Naive thymus-derived CD8-positive, alpha-beta T cell (primary cell): ENCODE measurements at regions of chr16 and their contacts with region 1.

Region 1: GRCh38 chr16:31179747-31180459 is at the start of gene FUS:
- DNase-seq: peak; percentile 83 to 98 (median 92)
- ATAC-seq: peak; percentile 54 to 62
- H3K4me3 Mint-ChIP-seq: peak within 1 kb of the TSS; percentile 92 to 98 (median 95)
- H3K27ac Mint-ChIP-seq: peak within 1 kb of the TSS; percentile 97 to 100 (median 99)
- H3K4me1 Mint-ChIP-seq: peaks cover 43 to 70% (median 59%) of the 10 kb centered on the region in 4 donors
- H3K27me3 Mint-ChIP-seq: peaks cover 0 to 3% (median 0%) of the 10 kb centered on the region in 5 donors
- polyA plus RNA-seq, gene FUS: 118 to 163 (median 149) TPM

Region 2: DNA sequence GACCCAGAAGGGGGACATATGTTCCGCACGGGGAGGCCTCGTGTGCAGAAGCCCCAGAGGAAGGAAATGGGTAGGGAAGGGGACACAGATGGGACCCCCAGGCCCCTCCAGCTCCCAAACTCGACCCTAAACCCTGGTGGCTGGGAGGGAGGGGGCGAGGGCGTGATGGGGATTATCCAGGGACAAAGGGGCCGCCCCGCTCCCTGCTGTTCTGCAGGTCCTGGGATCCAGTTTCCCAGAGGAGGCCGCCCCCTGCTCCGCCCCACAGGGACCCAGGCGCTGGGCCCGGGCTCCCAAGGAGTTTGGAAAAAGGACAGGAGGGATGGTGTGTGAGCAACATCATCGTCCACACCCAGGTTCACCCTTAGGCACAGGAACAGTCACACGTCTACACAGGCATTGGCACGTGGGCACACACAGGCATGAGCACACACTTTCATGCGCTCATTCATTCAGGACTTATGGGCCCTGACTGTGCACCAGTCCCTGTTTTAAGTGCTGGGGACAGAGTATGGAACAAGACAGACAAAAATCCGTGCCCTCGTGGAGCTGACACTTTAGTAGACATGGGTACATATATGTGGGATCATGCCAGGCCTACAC is 269.4 kb before region 1 on chr16:
- POLR2A ChIA-PET with region 1: no interaction called
- DNase-seq: no peak
- ATAC-seq: no peak
- H3K4me3 Mint-ChIP-seq: no peak overlapping the region
- H3K27ac Mint-ChIP-seq: peak overlapping the region in 1 of 10 donors; percentile 24
- H3K4me1 Mint-ChIP-seq: peaks cover 7 to 12% (median 10%) of the 10 kb centered on the region in 4 donors
- H3K27me3 Mint-ChIP-seq: no peaks in the 10 kb centered on the region

Region 3: GRCh38 chr16:31108035-31108793 is 71.7 kb before region 1 on chr16 and contains the start of gene BCKDK:
- POLR2A ChIA-PET with region 1: interaction called, 28 read pairs
- DNase-seq: peak in 9 of 10 donors; percentile 31 to 58 (median 53)
- ATAC-seq: peak; percentile 76 to 78
- H3K4me3 Mint-ChIP-seq: peak within 1 kb of the TSS; percentile 77 to 89 (median 85)
- H3K27ac Mint-ChIP-seq: peak within 1 kb of the TSS; percentile 55 to 93 (median 86)
- H3K4me1 Mint-ChIP-seq: peaks cover 8 to 23% (median 20%) of the 10 kb centered on the region in 4 donors
- H3K27me3 Mint-ChIP-seq: no peaks in the 10 kb centered on the region
- polyA plus RNA-seq, gene BCKDK: 20.8 to 30.8 (median 23.4) TPM

Region 4: DNA sequence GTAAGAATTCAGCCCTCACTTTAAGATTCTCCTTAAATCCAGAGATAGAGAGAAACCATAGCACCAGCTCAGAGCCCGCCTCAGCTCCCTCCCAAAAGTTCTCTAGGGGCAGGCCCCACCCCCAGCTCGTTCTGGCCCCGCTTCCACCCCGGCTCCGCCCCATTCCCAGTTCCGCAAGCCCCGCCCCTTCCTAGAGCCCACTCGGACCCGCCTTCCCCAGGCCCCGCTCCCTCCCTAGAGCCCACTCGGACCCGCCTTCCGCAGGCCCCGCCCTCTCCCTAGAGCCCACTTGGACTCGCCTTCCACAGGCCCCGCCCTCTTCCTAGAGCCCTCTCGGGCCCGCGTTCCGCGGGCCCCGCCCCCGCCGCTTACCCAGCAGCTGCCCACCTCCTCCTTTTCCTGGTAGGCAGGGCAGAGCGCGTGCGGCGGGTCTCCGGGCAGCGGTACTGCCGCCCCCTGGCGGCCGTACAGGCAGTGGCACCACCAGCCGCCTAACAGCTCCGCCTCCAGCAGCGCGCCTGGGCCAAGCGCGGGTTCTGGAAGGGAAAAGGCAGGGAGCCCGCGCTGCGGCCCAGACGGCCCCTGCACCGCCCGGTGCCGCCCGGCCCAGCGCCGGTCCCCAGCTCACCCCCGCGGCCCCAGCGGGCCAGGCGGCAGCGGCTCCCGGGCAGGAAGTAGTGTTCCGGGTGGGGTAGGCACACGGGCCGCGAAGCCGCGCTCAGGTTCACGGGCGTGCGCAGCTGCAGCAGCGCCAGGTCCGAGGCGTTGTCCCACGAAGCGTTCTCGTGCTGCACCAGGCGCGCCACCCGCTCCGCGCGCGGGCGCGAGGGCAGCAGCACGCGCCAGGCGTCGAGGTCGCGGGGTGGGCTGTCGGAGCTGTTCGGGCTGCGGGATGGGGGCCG is 37.5 kb before region 1 on chr16:
- POLR2A ChIA-PET with region 1: interaction called, 240 read pairs
- DNase-seq: peak; percentile 92 to 99 (median 96)
- ATAC-seq: peak; percentile 85 to 87
- H3K4me3 Mint-ChIP-seq: peak overlapping the region; percentile 52 to 82 (median 68)
- H3K27ac Mint-ChIP-seq: peak overlapping the region; percentile 8 to 95 (median 90)
- H3K4me1 Mint-ChIP-seq: peaks cover 10 to 18% (median 15%) of the 10 kb centered on the region in 4 donors
- H3K27me3 Mint-ChIP-seq: peaks cover 0 to under 1% (median 0%) of the 10 kb centered on the region in 5 donors

Region 5: GRCh38 chr16:31168848-31169247 is 11.1 kb before region 1 on chr16:
- POLR2A ChIA-PET with region 1: interaction called, 16 read pairs
- DNase-seq: no peak
- ATAC-seq: no peak
- H3K4me3 Mint-ChIP-seq: no peak overlapping the region
- H3K27ac Mint-ChIP-seq: peak overlapping the region in 1 of 10 donors; percentile 62
- H3K4me1 Mint-ChIP-seq: peaks cover 0 to 2% (median 1%) of the 10 kb centered on the region in 4 donors
- H3K27me3 Mint-ChIP-seq: no peaks in the 10 kb centered on the region

Region 6: GRCh38 chr16:31202414-31203375 is 22.8 kb after region 1 on chr16 and contains the start of gene PYCARD:
- POLR2A ChIA-PET with region 1: interaction called, 164 read pairs
- DNase-seq: peak in 4 of 10 donors; percentile 18 to 55 (median 40)
- ATAC-seq: peak; percentile 41 to 45
- H3K4me3 Mint-ChIP-seq: peak within 1 kb of the TSS; percentile 85 to 93 (median 89)
- H3K27ac Mint-ChIP-seq: peak within 1 kb of the TSS; percentile 80 to 91 (median 88)
- H3K4me1 Mint-ChIP-seq: peaks cover 30 to 56% (median 54%) of the 10 kb centered on the region in 4 donors
- H3K27me3 Mint-ChIP-seq: no peaks in the 10 kb centered on the region
- polyA plus RNA-seq, gene PYCARD: 39.3 to 65.2 (median 39.7) TPM

Region 7: GRCh38 chr16:31273676-31274075 is 93.8 kb after region 1 on chr16:
- POLR2A ChIA-PET with region 1: no interaction called
- DNase-seq: no peak
- ATAC-seq: no peak
- H3K4me3 Mint-ChIP-seq: no peak overlapping the region
- H3K27ac Mint-ChIP-seq: no peak overlapping the region
- H3K4me1 Mint-ChIP-seq: peaks cover 0 to 4% (median 0%) of the 10 kb centered on the region in 4 donors
- H3K27me3 Mint-ChIP-seq: peaks cover 0 to 6% (median 0%) of the 10 kb centered on the region in 5 donors

Region 8: GRCh38 chr16:31458844-31459721 is 279.2 kb after region 1 on chr16 and contains the start of gene ARMC5:
- POLR2A ChIA-PET with region 1: interaction called, 21 read pairs
- DNase-seq: peak; percentile 90 to 99 (median 96)
- ATAC-seq: peak; percentile 71 to 76
- H3K4me3 Mint-ChIP-seq: peak within 1 kb of the TSS; percentile 90 to 97 (median 93)
- H3K27ac Mint-ChIP-seq: peak within 1 kb of the TSS; percentile 92 to 100 (median 98)
- H3K4me1 Mint-ChIP-seq: peaks cover 16 to 54% (median 42%) of the 10 kb centered on the region in 4 donors
- H3K27me3 Mint-ChIP-seq: no peaks in the 10 kb centered on the region
- polyA plus RNA-seq, gene ARMC5: 6.2 to 9.8 (median 8.0) TPM